Activated naive CD4-positive, alpha-beta T cell treated with anti-CD3 and anti-CD28 coated beads for 36 hours (primary cell): ENCODE measurements at regions of chr17 and their contacts with region 1.

Region 1: GRCh38 chr17:32370426-32370825 is 20.5 kb downstream of the ZNF207 start:
- DNase-seq: no peak
- H3K4me3 Mint-ChIP-seq: no peak overlapping the region
- H3K27ac Mint-ChIP-seq: peak overlapping the region; percentile 62
- H3K4me1 Mint-ChIP-seq: peaks cover 52% of the 10 kb centered on the region
- H3K27me3 Mint-ChIP-seq: no peaks in the 10 kb centered on the region

Region 2: GRCh38 chr17:32265192-32265923 is 105.1 kb before region 1 on chr17 and contains the start of gene RHBDL3:
- CTCF ChIA-PET with region 1: no interaction called
- intact Hi-C with region 1: no loop called
- DNase-seq: no peak
- H3K4me3 Mint-ChIP-seq: peak within 1 kb of the TSS; percentile 68
- H3K27ac Mint-ChIP-seq: no peak within 1 kb of the TSS
- H3K4me1 Mint-ChIP-seq: peaks cover 13% of the 10 kb centered on the region
- H3K27me3 Mint-ChIP-seq: peaks cover 54% of the 10 kb centered on the region
- total RNA-seq, gene RHBDL3: not detected

Region 3: GRCh38 chr17:32349854-32350665 is 20.4 kb before region 1 on chr17 and contains the start of gene ZNF207:
- CTCF ChIA-PET with region 1: interaction called, 6 read pairs
- intact Hi-C with region 1: loop called (anchors 1 kb)
- DNase-seq: peak; percentile 98
- H3K4me3 Mint-ChIP-seq: peak within 1 kb of the TSS; percentile 97
- H3K27ac Mint-ChIP-seq: peak within 1 kb of the TSS; percentile 99
- H3K4me1 Mint-ChIP-seq: peaks cover 40% of the 10 kb centered on the region
- H3K27me3 Mint-ChIP-seq: no peaks in the 10 kb centered on the region
- total RNA-seq, gene ZNF207: 213 to 230 TPM

Region 4: DNA sequence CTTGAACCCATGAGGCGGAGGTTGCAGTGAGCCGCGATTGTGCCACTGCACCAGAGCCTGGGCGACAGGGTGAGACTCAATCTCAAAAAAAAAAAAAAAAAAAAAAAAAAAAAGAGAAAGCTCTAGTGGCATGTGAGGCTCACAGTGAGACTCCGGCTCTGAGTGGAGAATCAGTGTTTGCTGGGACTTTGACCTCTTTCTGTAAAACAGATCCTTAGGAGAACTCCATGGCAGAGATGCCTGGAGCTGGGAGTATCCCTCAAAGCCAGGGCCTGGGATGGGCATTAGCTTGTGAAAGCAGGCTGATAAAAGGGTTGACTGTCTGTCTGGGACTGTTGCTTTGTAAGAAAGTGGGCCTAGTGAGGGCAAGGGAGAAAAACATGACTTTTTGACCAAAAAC is 25.9 kb after region 1 on chr17:
- CTCF ChIA-PET with region 1: no interaction called
- intact Hi-C with region 1: no loop called
- DNase-seq: no peak
- H3K4me3 Mint-ChIP-seq: no peak overlapping the region
- H3K27ac Mint-ChIP-seq: peak overlapping the region; percentile 53
- H3K4me1 Mint-ChIP-seq: peaks cover 2% of the 10 kb centered on the region
- H3K27me3 Mint-ChIP-seq: no peaks in the 10 kb centered on the region